ENCODE measurements at regions of chrX and their contacts with region 1.

Region 1: DNA sequence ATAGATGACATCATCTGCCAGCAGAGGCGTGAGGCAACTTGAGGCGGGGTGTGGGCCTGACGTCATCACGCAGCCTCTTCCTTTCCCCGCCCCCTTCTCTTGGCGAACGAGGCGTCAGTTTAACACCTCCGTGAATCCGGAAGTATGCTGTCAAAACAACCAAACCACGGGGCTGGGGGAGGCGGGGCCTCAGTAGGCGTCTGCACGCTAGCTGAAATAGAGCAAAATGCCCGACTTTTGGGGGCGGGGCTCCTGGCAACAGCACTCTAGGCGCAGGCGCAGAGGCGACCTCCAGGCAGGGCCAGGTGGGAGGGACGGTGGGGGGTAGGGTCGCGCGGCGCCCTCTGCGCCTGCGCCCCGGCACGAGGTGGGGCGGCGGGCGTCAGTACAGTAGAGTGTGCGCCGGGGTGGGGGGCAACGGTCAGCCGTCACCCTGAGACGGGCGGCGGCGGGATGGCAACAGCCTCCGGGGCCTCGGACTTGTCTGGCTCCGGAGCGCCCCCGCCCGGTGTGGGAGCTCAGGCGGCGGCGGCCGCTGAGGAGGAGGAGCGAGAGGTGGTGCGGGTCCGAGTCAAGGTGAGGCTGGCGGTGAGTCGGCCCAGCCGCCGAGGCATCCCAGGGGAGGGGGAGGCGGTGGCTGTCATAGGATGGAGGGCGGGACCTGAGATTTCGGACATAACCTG is at the start of gene TBC1D25:
- DNase-seq: peak; percentile 95 to 98
- ATAC-seq: peak; percentile 94 to 97
- H3K4me3 ChIP-seq: peak within 1 kb of the TSS; percentile 70 to 82 (median 78)
- H3K27ac ChIP-seq: peak within 1 kb of the TSS; percentile 91 to 96 (median 92)
- H3K4me1 ChIP-seq: peaks cover 0 to 3% of the 10 kb centered on the region in 2 donors
- H3K27me3 ChIP-seq: no peaks in the 10 kb centered on the region
- CTCF ChIP-seq: peak; percentile 8 to 41 (median 30)
- POLR2A ChIP-seq: peak; percentile 66 to 75
- total RNA-seq, gene TBC1D25: 10.3 to 14.8 (median 11.9) TPM

Region 2: GRCh38 chrX:48508400-48509244 is 30.9 kb before region 1 on chrX and contains the start of gene PORCN:
- in situ Hi-C with region 1: no loop called
- intact Hi-C with region 1: loop called (anchors 1 kb)
- DNase-seq: peak; percentile 70 to 76
- ATAC-seq: peak; percentile 91 to 94
- H3K4me3 ChIP-seq: peak within 1 kb of the TSS; percentile 68 to 78 (median 76)
- H3K27ac ChIP-seq: peak within 1 kb of the TSS; percentile 83 to 85 (median 84)
- H3K4me1 ChIP-seq: no peaks in the 10 kb centered on the region
- H3K27me3 ChIP-seq: no peaks in the 10 kb centered on the region
- CTCF ChIP-seq: no peak
- POLR2A ChIP-seq: peak; percentile 53 to 61
- total RNA-seq, gene PORCN: 11.4 to 18.7 (median 12.3) TPM

Region 3: GRCh38 chrX:48574270-48575266 is 35.1 kb after region 1 on chrX and contains the start of gene RBM3:
- in situ Hi-C with region 1: no loop called
- intact Hi-C with region 1: loop called (anchors 1 kb)
- DNase-seq: peak; percentile 90 to 91
- ATAC-seq: peak; percentile 97 to 98
- H3K4me3 ChIP-seq: peak within 1 kb of the TSS; percentile 64 to 89 (median 81)
- H3K27ac ChIP-seq: peak within 1 kb of the TSS; percentile 94 to 99 (median 98)
- H3K4me1 ChIP-seq: peaks cover 11 to 14% of the 10 kb centered on the region in 2 donors
- H3K27me3 ChIP-seq: no peaks in the 10 kb centered on the region
- CTCF ChIP-seq: peak in 4 of 5 experiments; percentile 31 to 42 (median 34)
- POLR2A ChIP-seq: peak; percentile 84 to 88
- total RNA-seq, gene RBM3: 49.2 to 92.1 (median 59.9) TPM